Ovary (tissue), 10 donors: ENCODE measurements at regions of chr17 and their contacts with region 1.

Region 1: GRCh38 chr17:20009302-20010098 is at the start of gene SPECC1:
- DNase-seq: peak; percentile 84 to 95 (median 90)
- H3K4me3 ChIP-seq: peak within 1 kb of the TSS; percentile 76
- H3K27ac ChIP-seq: peak within 1 kb of the TSS; percentile 72 to 76
- H3K4me1 ChIP-seq: no peaks in the 10 kb centered on the region
- H3K27me3 ChIP-seq: no peaks in the 10 kb centered on the region
- CTCF ChIP-seq: peak in 2 of 3 donors; percentile 99
- EP300 ChIP-seq: no peak
- POLR2A ChIP-seq: no peak
- total RNA-seq, gene SPECC1: 34.7 to 86.5 (median 68.7) TPM

Region 2: GRCh38 chr17:19857640-19858039 is 151.9 kb before region 1 on chr17:
- intact Hi-C with region 1: no loop called
- DNase-seq: no peak
- H3K4me3 ChIP-seq: no peak overlapping the region
- H3K27ac ChIP-seq: no peak overlapping the region
- H3K4me1 ChIP-seq: no peaks in the 10 kb centered on the region
- H3K27me3 ChIP-seq: no peaks in the 10 kb centered on the region
- CTCF ChIP-seq: no peak
- EP300 ChIP-seq: no peak
- POLR2A ChIP-seq: no peak

Region 3: GRCh38 chr17:20095336-20096080 is 86.0 kb after region 1 on chr17:
- intact Hi-C with region 1: loop called in 3 of 4 experiments (anchors 2 to 10 kb)
- DNase-seq: peak; percentile 58 to 76 (median 72)
- H3K4me3 ChIP-seq: no peak overlapping the region
- H3K27ac ChIP-seq: no peak overlapping the region
- H3K4me1 ChIP-seq: peaks cover 13% of the 10 kb centered on the region
- H3K27me3 ChIP-seq: no peaks in the 10 kb centered on the region
- CTCF ChIP-seq: peak in 2 of 3 donors; percentile 5 to 34
- EP300 ChIP-seq: no peak
- POLR2A ChIP-seq: no peak

Region 4: DNA sequence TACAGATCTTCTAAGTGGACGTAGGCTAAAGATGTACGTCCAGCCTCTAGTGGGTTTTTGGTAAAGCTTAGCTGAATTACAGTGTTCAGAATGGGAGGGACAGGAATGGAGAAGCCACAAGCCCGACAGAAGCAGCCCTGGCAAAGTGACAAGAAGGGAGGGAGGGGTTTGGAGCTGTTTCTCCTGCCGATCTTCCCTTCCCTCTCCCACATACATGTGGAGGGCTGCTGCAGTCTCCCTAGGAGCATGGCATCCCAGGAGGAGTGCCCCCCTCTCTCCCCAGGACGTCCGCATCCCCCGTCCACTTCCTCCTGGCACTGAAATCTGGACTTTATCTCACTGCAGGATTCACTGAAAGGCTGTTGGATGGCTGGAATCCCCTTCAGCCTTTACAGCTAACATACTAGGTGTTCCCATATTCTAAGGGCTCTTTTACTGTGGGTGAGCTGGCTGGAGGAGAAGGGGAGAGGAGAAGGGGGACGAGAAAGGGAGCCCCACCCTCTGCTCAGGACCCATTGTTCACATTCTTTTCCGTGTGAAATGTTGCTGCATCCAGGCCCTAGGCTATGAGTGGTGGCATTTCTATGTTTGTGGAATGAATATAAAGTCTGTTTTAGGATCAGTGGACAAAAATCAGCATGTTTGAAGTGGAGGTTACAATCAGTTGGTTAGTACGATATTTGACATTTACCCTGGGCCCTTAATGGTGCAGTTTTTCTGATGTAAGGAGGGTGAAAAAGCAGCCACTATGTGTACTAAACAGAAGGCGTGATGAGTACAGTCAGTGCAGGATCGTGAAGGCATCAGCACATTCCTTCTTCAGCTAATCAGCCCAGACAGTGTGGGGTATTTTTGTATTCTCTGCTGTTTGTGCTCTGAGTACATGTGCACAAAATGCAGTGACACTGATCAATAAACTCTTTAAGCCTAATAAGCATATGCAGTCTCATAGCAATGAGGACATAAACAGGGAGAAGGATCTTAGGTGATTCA is 94.2 kb after region 1 on chr17:
- intact Hi-C with region 1: loop called in 2 of 4 experiments (anchors 10 kb)
- DNase-seq: peak in 1 of 5 donors; percentile 33
- H3K4me3 ChIP-seq: no peak overlapping the region
- H3K27ac ChIP-seq: no peak overlapping the region
- H3K4me1 ChIP-seq: peaks cover 9% of the 10 kb centered on the region
- H3K27me3 ChIP-seq: no peaks in the 10 kb centered on the region
- CTCF ChIP-seq: no peak
- EP300 ChIP-seq: no peak
- POLR2A ChIP-seq: no peak